Activated CD4-positive, alpha-beta memory T cell treated with anti-CD3 and anti-CD28 coated beads, Interleukin-2, amount 10 ng/mL, durations not matched to agents 7 days and 5 days (primary cell): ENCODE measurements at regions of chr16 and their contacts with region 1.

Region 1: DNA sequence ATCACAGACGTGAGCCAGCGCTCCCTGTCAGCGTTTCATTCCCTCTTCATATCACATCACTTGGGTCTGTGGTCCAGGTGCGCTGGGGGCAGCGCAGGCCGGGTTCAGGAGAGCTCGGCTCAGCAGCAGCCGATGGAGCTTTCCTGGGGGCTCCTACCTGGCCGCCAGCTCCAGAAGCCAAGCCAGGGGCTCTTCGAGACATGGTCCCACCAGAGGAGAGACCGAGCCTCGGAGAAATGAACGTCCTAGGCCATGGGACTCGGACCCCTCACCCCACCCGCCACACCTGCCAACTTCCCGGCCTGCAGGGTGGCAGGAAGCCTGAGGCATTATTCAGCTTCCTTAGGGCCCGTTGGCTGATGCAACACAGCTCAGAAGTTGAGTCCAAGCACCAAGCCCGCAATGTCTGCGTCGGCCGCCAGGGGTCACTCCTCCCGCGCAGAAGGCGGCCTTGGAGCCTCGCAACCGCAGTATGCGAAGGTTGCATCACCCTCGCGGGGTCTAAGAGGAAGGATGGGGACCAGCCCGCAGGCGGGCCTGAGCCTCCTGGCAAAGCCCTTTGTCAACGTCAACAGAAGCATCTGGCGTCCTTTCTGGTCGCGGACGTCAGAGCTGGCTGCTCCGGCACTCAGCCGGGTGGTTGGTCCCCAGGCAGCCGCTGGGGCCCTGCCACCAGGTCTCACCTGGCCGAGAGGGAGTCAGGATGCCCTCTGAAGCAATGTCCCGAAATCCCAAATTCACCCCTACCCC is 13.2 kb upstream of the KLHDC4 start:
- DNase-seq: peak; percentile 97
- H3K4me3 Mint-ChIP-seq: peak overlapping the region; percentile 69
- H3K27ac Mint-ChIP-seq: peak overlapping the region; percentile 97
- H3K4me1 Mint-ChIP-seq: peaks cover 61% of the 10 kb centered on the region
- H3K27me3 Mint-ChIP-seq: no peaks in the 10 kb centered on the region

Region 2: DNA sequence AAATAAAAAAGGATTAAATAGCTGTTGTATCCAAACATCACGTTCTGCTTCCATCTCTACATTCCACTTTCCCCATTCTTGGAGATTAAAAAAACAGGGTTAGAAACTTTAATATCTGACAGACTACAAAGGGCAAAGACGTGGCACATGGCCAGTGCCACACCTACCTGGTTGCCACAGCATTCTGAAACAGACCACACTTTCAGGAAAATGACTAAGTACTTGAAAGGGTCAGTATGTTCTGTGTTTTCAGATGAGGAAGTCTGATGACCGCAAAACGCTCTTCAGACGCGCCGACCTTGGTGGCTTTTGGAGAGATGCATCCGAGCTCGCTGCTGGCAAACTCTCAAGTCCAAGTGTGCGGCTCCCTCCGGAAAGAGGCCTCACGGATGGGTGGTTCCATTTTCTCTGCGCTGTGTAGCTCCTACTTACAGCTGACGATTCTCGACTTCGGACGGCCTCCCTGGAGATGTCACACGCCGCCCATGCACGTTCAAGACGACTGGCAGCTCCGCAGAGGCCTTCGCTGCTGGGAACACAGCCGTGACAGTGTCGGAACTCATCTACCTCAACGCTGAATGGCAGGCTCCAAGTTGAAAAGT is 371.4 kb before region 1 on chr16:
- CTCF ChIA-PET with region 1: no interaction called
- POLR2A ChIA-PET with region 1: no interaction called
- DNase-seq: no peak
- H3K4me3 Mint-ChIP-seq: no peak overlapping the region
- H3K27ac Mint-ChIP-seq: no peak overlapping the region
- H3K4me1 Mint-ChIP-seq: peaks cover 5% of the 10 kb centered on the region
- H3K27me3 Mint-ChIP-seq: no peaks in the 10 kb centered on the region

Region 3: GRCh38 chr16:87765776-87766484 is 13.1 kb before region 1 on chr16 and contains the start of gene KLHDC4:
- CTCF ChIA-PET with region 1: interaction called, 76 read pairs
- POLR2A ChIA-PET with region 1: interaction called, 43 read pairs
- DNase-seq: peak; percentile 92
- H3K4me3 Mint-ChIP-seq: peak within 1 kb of the TSS; percentile 97
- H3K27ac Mint-ChIP-seq: peak within 1 kb of the TSS; percentile 97
- H3K4me1 Mint-ChIP-seq: peaks cover 48% of the 10 kb centered on the region
- H3K27me3 Mint-ChIP-seq: no peaks in the 10 kb centered on the region
- total RNA-seq, gene KLHDC4: 82.1 to 84.9 TPM

Region 4: GRCh38 chr16:87806603-87807546 is 27.9 kb after region 1 on chr16:
- CTCF ChIA-PET with region 1: interaction called, 17 read pairs
- POLR2A ChIA-PET with region 1: interaction called, 12 read pairs
- DNase-seq: peak; percentile 62
- H3K4me3 Mint-ChIP-seq: peak overlapping the region; percentile 73
- H3K27ac Mint-ChIP-seq: peak overlapping the region; percentile 88
- H3K4me1 Mint-ChIP-seq: peaks cover 41% of the 10 kb centered on the region
- H3K27me3 Mint-ChIP-seq: peaks cover 4% of the 10 kb centered on the region

Region 5: DNA sequence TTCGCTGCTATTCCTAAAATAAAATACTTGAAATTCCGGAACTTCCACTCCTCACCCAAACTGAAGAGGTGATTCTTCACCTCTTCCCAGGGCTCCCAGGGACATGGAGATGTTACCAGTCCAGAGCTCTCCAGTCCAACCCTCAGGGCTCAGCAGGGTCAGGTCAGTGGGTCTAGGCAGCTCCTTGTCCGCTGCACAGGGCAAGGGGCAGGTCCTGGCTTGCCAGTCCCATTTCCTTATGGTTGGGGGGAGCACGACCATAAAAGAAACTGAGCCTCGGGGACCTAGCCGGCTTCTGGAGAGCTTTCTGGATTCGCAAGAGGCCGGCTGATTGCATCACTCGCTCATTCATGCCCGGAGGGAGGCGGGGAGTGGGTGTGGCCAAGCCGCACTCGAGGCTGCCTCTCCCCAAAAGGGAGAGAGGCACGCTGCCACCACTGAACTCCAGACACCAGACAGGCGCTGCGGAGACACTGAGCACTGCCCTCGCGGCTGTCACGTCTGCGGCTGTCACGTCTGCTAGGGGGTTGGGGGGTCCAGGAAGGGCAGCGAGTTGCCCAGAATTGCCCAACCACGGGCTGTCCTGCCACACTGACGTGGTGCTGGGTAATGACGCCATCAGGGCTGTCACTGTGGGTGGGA is 74.5 kb after region 1 on chr16:
- CTCF ChIA-PET with region 1: interaction called, 102 read pairs
- POLR2A ChIA-PET with region 1: interaction called, 20 read pairs
- DNase-seq: peak; percentile 95
- H3K4me3 Mint-ChIP-seq: peak overlapping the region; percentile 66
- H3K27ac Mint-ChIP-seq: peak overlapping the region; percentile 90
- H3K4me1 Mint-ChIP-seq: peaks cover 67% of the 10 kb centered on the region
- H3K27me3 Mint-ChIP-seq: no peaks in the 10 kb centered on the region

Region 6: DNA sequence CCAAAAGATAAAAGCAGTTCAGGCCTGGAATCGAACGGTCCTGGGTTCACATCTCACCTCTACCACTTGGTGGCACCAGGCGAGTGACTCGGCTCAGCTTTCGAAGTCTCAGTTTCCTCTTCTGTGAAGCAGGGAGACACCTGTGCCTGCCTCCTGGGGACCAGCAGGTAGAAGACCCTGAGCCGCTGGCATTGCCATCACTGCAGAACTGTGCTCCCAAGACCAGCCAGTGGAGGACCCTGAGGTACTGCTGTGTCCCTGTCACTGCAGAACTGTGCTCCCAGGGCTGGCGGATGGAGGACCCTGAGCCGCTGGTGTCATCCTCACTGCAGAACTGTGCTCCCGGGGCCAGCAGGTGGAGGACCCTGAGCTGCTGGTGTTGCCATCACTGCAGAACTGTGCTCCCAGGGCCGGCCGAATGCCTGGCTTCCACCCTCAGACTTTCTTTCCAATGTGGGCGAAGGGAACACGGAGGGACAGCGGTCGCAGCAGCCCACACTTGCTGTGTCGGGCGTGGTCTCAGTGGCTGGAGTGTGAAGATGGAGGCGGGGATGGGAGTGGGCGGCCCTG is 99.0 kb after region 1 on chr16:
- CTCF ChIA-PET with region 1: interaction called, 454 read pairs
- POLR2A ChIA-PET with region 1: interaction called, 21 read pairs
- DNase-seq: peak; percentile 57
- H3K4me3 Mint-ChIP-seq: no peak overlapping the region
- H3K27ac Mint-ChIP-seq: no peak overlapping the region
- H3K4me1 Mint-ChIP-seq: peaks cover 30% of the 10 kb centered on the region
- H3K27me3 Mint-ChIP-seq: peaks cover 22% of the 10 kb centered on the region

Region 7: DNA sequence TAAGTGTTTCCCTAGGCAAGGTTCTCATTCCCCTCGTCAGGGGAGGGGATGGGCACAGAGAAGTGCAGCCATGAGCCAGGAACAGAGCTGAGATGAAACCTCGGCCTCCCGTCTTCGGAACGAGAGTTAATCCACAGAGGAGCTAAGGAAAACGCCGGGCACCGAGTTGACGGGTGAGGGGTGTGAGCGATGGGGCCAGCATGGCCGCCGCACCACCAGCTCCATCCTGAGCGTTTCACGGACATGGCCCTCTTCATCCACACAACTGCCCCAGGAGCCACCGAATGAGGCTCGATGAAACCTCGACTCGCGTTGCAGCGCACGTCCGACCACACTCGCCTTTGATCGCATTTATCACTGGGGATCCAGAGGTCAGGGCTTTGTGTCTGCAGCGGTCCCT is 135.8 kb after region 1 on chr16:
- CTCF ChIA-PET with region 1: interaction called, 45 read pairs
- POLR2A ChIA-PET with region 1: no interaction called
- DNase-seq: no peak
- H3K4me3 Mint-ChIP-seq: no peak overlapping the region
- H3K27ac Mint-ChIP-seq: no peak overlapping the region
- H3K4me1 Mint-ChIP-seq: peaks cover 4% of the 10 kb centered on the region
- H3K27me3 Mint-ChIP-seq: peaks cover 10% of the 10 kb centered on the region